ENCODE measurements at regions of chr3 and their contacts with region 1.

Region 1: GRCh38 chr3:49906004-49906743 is 2.5 kb upstream of the MST1R start:
- DNase-seq: peak; percentile 84

Region 2: DNA sequence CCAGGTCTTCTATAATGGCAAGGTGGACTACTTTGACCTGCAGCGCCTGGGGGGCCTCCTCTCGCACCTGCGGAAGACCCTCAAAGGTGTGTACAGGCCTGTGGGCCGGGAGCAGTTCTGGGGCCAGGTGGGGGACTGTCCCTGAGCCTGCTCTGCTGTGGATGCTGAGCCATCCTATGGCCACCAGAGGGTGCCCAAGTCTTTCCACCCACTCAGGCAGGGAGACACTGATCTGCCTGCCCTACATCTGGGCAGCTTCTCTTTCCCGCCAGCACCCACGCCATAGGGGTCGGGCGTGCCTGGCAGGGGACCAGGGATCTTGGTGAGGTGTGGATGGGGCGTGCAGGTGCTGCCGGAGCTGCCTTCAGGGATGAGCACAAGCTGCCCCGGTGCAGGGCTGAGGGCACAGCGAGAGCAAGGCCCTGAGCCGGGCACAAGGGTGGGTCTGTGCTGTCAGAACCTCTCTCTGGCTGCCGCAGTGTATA is 202.7 kb before region 1 on chr3:
- intact Hi-C with region 1: loop called in 1 of 2 experiments (anchors 10 kb)
- DNase-seq: no peak

Region 3: DNA sequence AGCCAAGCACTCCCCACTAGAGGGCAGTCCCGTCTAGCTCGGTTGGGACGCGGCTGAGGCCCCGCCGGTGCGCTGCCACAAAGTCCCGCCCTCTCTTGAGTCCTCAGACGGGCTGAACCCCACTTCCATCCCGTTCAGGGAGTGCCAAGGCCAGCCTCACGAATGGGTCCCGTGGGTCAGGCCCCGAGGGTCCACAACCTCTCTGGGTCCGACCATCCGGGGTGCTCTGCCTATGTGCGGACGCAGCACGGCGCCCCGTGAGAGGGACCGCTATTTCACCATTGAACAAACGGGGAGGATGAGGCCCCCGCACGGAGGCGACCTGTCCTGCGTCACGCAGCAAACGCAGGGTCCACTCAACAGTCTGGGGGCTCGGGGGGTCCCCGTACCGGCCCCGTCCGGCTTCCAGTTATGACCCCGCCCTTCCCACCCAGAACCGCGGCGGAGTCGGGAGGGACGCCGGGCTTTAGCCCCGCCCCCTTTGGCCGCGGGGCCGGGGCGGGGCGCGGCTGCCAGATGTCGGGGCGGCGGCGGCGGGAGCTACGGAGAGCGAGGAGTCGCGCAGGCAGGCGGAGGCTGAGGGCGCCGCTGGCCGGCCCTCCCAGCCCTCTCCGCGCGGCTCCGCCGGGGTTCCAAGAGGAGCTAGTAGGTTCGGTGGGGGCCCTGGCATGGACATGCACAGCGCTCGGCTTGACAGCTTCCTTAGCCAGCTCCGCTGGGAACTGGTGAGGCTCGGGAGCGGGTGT is 103.3 kb before region 1 on chr3 and contains the start of gene INKA1:
- intact Hi-C with region 1: loop called in 1 of 2 experiments (anchors 5 kb)
- DNase-seq: peak; percentile 96
- total RNA-seq, gene INKA1: 5.6 to 5.9 TPM

Region 4: GRCh38 chr3:49916686-49917085 is 10.5 kb after region 1 on chr3:
- intact Hi-C with region 1: no loop called
- DNase-seq: no peak

Region 5: GRCh38 chr3:50350527-50351322 is 444.6 kb after region 1 on chr3 and contains the starts of genes CYB561D2 and NPRL2:
- intact Hi-C with region 1: no loop called
- DNase-seq: peak; percentile 99
- total RNA-seq, gene CYB561D2: 7.9 to 10.5 TPM
- total RNA-seq, gene NPRL2: 10.6 to 17.4 TPM